AG04450 (cell line): ENCODE measurements at regions of chr3 and their contacts with region 1.

Region 1: DNA sequence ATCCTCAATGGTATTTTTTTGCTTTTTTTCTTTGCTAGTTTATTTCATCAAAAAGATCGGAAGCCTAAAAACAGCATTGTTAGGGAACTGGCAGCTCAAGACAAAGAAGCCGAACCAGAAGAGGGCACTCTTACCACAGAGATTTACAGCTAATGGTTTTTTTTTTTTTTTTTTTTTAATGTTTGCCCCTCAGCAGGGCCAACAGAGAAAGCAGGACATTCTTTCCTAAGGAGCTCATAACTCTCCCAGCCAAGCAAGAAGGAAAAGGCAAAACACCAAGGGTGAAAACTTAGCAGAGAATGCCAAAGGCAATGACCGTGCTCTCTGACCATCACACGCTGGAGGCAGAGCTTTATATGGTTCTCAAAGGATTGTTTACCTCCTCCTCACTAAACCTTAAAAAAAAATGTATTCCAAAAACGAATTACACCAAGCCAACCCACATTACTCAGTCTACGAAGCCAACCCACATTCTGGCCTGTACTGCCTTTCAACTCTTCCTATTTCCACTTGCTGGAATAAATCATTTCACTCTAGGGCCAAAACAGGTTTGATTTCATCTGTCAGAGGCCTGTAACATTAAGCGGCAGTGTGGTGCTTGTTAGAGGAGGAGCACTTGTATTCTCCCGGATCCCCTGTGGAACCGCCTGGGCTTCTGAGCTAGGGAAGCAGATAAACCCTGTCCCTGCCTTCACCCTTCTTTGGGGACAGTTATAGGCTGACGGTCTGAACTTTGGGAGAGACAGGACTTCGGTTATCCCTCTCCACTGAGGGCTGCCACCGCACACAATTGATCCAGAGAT is 35.6 kb upstream of the GYG1 start:
- DNase-seq: peak; percentile 87
- H3K4me3 ChIP-seq: no peak overlapping the region
- H3K27ac ChIP-seq: peak overlapping the region; percentile 93
- H3K27me3 ChIP-seq: no peaks in the 10 kb centered on the region
- CTCF ChIP-seq: peak; percentile 78

Region 2: DNA sequence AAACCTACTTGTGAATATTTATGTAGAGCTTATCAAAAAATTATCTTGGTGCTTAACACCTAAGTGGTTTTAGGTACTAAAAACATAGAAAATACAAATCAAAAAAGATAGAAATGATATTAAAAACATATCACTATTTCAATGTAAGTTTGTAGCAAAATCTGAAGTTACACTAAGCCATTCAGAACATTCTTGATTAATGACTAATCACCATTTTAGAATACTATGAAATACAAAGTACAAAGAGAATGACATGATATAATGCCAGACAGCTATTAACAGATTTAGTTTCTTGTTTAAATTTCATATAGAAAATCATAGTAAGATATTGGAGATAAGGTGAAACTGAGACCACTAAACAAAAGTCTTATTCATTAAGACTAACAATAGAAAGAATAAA is 427.7 kb before region 1 on chr3:
- CTCF ChIA-PET with region 1: no interaction called
- POLR2A ChIA-PET with region 1: no interaction called
- DNase-seq: no peak
- H3K4me3 ChIP-seq: no peak overlapping the region
- H3K27ac ChIP-seq: no peak overlapping the region
- H3K27me3 ChIP-seq: no peaks in the 10 kb centered on the region
- CTCF ChIP-seq: no peak

Region 3: GRCh38 chr3:148971401-148972163 is 15.8 kb after region 1 on chr3:
- CTCF ChIA-PET with region 1: interaction called, 37 read pairs
- POLR2A ChIA-PET with region 1: no interaction called
- DNase-seq: peak; percentile 51
- H3K4me3 ChIP-seq: no peak overlapping the region
- H3K27ac ChIP-seq: no peak overlapping the region
- H3K27me3 ChIP-seq: no peaks in the 10 kb centered on the region
- CTCF ChIP-seq: no peak

Region 4: GRCh38 chr3:148998715-148999423 is 43.1 kb after region 1 on chr3:
- CTCF ChIA-PET with region 1: interaction called, 13 read pairs
- POLR2A ChIA-PET with region 1: interaction called, 8 read pairs
- DNase-seq: no peak
- H3K4me3 ChIP-seq: no peak overlapping the region; the same call in 1 of the 2 replicates
- H3K27ac ChIP-seq: no peak overlapping the region
- H3K27me3 ChIP-seq: no peaks in the 10 kb centered on the region
- CTCF ChIP-seq: no peak

Region 5: DNA sequence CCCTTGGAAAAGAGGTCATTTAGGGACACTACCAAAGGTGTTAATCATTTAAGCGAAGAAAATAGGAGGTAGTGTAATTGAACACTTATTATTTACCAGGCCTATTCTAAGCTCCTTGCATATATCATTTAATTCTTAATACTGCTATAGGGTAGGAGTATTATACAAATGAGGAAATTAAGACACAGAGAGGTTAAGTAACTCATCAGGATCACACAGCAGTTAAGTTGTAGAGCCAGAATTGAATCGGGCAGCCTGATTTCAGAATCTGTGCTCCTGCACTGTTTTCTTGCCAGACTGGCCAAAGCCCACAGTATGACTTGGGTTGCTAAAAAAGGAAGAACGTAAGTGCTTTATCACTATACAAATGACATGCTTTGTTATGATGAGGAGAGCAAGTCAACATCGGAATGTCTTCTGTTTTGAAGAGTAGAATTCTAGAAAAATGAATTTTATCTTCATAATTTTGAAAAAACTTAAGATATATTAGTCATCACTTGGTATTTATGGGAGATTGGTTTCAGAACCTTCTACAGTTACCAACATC is 205.1 kb after region 1 on chr3:
- CTCF ChIA-PET with region 1: interaction called, 12 read pairs
- POLR2A ChIA-PET with region 1: no interaction called
- DNase-seq: no peak
- H3K4me3 ChIP-seq: no peak overlapping the region
- H3K27ac ChIP-seq: no peak overlapping the region
- H3K27me3 ChIP-seq: no peaks in the 10 kb centered on the region
- CTCF ChIP-seq: no peak

Region 6: GRCh38 chr3:149195221-149195620 is 239.5 kb after region 1 on chr3:
- CTCF ChIA-PET with region 1: no interaction called
- POLR2A ChIA-PET with region 1: no interaction called
- DNase-seq: no peak
- H3K4me3 ChIP-seq: no peak overlapping the region
- H3K27ac ChIP-seq: no peak overlapping the region
- H3K27me3 ChIP-seq: no peaks in the 10 kb centered on the region
- CTCF ChIP-seq: no peak

Region 7: GRCh38 chr3:149273096-149273751 is 317.5 kb after region 1 on chr3:
- CTCF ChIA-PET with region 1: interaction called, 105 read pairs
- POLR2A ChIA-PET with region 1: interaction called, 4 read pairs
- DNase-seq: peak; percentile 79
- H3K4me3 ChIP-seq: no peak overlapping the region
- H3K27ac ChIP-seq: no peak overlapping the region
- H3K27me3 ChIP-seq: no peaks in the 10 kb centered on the region
- CTCF ChIP-seq: peak; percentile 98

Region 8: DNA sequence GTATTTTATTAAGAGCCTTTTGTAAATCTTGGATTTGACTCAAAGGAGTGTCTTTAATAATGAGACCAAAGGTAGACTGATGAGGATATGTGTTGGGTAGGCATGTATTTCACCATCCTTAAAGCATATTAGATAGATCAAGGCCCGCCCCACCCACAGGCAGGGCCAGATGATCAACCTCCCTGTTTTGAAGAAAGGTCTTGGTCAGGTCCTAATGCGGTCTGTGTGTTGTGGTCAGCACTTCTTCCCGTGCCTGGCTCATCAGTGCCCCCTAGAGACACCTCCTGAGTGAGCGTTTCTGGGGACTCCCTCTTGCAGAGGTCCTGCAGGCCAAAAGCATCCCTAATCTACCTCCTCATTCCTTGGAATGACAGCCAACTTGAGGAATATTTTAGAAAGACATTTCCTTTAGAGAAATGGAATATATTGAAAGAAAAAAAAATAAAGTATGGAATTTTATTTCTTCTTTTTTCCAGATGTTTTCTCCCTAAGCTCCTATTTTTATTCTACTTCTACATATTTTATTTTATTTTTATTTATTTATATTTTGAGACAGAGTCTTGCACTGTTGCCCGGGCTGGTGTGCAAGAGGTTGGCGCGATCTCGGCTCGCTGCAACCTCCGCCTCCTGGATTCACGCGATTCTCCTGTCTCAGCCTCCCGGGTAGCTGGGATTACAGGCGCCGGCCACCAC is 524.7 kb after region 1 on chr3:
- CTCF ChIA-PET with region 1: interaction called, 13 read pairs
- POLR2A ChIA-PET with region 1: no interaction called
- DNase-seq: peak; percentile 73
- H3K4me3 ChIP-seq: no peak overlapping the region
- H3K27ac ChIP-seq: no peak overlapping the region
- H3K27me3 ChIP-seq: no peaks in the 10 kb centered on the region
- CTCF ChIP-seq: peak; percentile 98

Region 9: DNA sequence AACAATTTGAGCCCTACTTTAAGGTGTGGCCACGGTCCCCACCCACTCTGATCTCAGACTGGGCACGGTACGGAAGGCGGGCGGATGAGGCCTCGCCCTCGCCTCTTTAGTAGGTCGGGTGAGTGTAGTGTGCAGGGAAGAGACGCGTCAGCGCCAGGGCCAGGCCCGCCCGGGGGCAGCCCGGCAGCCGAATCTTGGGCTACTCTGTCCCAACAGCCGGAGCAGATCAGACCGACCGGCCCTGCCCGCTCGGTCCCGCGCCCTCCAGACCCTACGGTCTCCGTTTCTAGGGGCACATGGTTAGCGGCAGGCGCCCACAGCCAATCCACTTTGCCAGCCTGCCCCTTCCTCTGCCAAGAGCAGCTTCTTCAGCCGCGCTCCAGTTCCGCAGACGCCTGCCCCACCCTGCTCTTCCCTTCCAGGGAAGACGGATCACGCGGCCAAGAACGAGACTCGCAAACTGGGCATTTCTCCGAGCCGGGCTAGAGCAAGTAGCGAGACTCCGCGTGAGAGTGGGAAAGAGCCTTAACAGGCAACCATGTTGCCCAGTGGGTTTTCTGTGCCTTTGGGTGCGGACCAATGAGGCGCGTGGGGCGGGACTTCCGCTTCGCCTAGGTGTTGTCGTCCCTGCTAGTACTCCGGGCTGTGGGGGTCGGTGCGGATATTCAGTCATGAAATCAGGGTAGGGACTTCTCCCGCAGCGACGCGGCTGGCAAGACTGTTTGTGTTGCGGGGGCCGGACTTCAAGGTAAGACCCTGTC is 857.0 kb after region 1 on chr3 and contains the start of gene RNF13:
- CTCF ChIA-PET with region 1: interaction called, 12 read pairs
- POLR2A ChIA-PET with region 1: no interaction called
- DNase-seq: peak; percentile 86
- H3K4me3 ChIP-seq: peak within 1 kb of the TSS; percentile 86
- H3K27ac ChIP-seq: peak within 1 kb of the TSS; percentile 97
- H3K27me3 ChIP-seq: no peaks in the 10 kb centered on the region
- CTCF ChIP-seq: no peak
- polyA plus RNA-seq, gene RNF13: 31.4 and 46.3 TPM in 2 replicates